MCF 10A (cell line): ENCODE measurements at regions of chr2 and their contacts with region 1.

Region 1: GRCh38 chr2:152025678-152026287 is 73.1 kb downstream of the CACNB4 start:
- DNase-seq: peak; percentile 79
- H3K4me3 Mint-ChIP-seq: peak overlapping the region; percentile 60
- H3K27ac Mint-ChIP-seq: no peak overlapping the region
- H3K4me1 Mint-ChIP-seq: peaks cover 24% of the 10 kb centered on the region
- H3K27me3 Mint-ChIP-seq: peaks cover under 1% of the 10 kb centered on the region
- CTCF ChIP-seq: peak; percentile 93

Region 2: GRCh38 chr2:151459358-151459757 is 566.4 kb before region 1 on chr2:
- CTCF ChIA-PET with region 1: interaction called, 9 read pairs
- POLR2A ChIA-PET with region 1: no interaction called
- intact Hi-C with region 1: loop called (anchors 10 kb)
- DNase-seq: no peak
- H3K4me3 Mint-ChIP-seq: no peak overlapping the region
- H3K27ac Mint-ChIP-seq: no peak overlapping the region
- H3K4me1 Mint-ChIP-seq: no peaks in the 10 kb centered on the region
- H3K27me3 Mint-ChIP-seq: no peaks in the 10 kb centered on the region
- CTCF ChIP-seq: no peak

Region 3: GRCh38 chr2:151614606-151615306 is 411.0 kb before region 1 on chr2:
- CTCF ChIA-PET with region 1: interaction called, 14 read pairs
- POLR2A ChIA-PET with region 1: no interaction called
- intact Hi-C with region 1: no loop called
- DNase-seq: no peak
- H3K4me3 Mint-ChIP-seq: no peak overlapping the region
- H3K27ac Mint-ChIP-seq: no peak overlapping the region
- H3K4me1 Mint-ChIP-seq: no peaks in the 10 kb centered on the region
- H3K27me3 Mint-ChIP-seq: no peaks in the 10 kb centered on the region
- CTCF ChIP-seq: no peak

Region 4: DNA sequence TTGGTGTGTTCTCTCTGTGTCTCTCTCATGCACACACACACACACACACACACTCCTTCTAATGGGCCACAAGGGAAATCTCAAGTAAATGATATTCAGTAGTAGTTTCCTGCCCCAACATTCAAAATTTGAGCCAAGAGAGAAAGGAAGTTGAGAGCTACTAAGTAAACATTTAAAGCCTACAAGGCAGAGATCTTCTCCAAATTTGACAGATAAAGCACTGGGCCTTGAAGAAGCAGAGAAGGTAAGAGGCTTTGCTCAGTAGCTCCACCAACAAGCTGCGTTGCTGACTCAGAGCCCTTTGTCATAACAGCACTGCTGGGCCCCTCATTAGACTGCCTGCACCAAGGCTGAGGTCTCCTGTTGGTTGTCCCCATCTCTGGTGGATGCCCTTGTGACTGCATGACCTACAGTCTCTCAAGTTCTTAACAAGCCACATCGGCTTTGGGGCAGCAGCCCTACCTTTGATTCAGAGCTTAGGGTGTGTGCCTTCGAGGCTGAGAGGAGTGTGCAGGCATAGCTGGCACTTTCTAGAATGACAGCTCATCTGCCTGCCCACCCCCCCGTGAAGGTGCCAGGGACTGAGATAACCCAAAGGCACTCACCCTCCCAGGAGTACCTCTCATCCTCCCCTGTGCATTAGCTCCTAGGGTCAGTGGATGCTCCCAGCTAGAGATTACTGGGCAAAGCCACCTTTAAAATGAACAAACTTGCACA is 259.2 kb before region 1 on chr2:
- CTCF ChIA-PET with region 1: interaction called, 12 read pairs
- POLR2A ChIA-PET with region 1: interaction called, 3 read pairs
- intact Hi-C with region 1: no loop called
- DNase-seq: no peak
- H3K4me3 Mint-ChIP-seq: no peak overlapping the region
- H3K27ac Mint-ChIP-seq: peak overlapping the region; percentile 25
- H3K4me1 Mint-ChIP-seq: no peaks in the 10 kb centered on the region
- H3K27me3 Mint-ChIP-seq: no peaks in the 10 kb centered on the region
- CTCF ChIP-seq: no peak

Region 5: GRCh38 chr2:151828143-151828889 is 197.5 kb before region 1 on chr2 and contains the start of gene ARL5A:
- CTCF ChIA-PET with region 1: interaction called, 9 read pairs
- POLR2A ChIA-PET with region 1: interaction called, 4 read pairs
- intact Hi-C with region 1: loop called (anchors 10 kb)
- DNase-seq: peak; percentile 95
- H3K4me3 Mint-ChIP-seq: peak within 1 kb of the TSS; percentile 93
- H3K27ac Mint-ChIP-seq: peak within 1 kb of the TSS; percentile 88
- H3K4me1 Mint-ChIP-seq: peaks cover 9% of the 10 kb centered on the region
- H3K27me3 Mint-ChIP-seq: no peaks in the 10 kb centered on the region
- CTCF ChIP-seq: no peak
- total RNA-seq, gene ARL5A: 34.8 and 40.9 TPM in 2 replicates

Region 6: GRCh38 chr2:152012697-152013096 is 13.1 kb before region 1 on chr2:
- CTCF ChIA-PET with region 1: interaction called, 70 read pairs
- POLR2A ChIA-PET with region 1: interaction called, 3 read pairs
- intact Hi-C with region 1: no loop called
- DNase-seq: no peak
- H3K4me3 Mint-ChIP-seq: no peak overlapping the region
- H3K27ac Mint-ChIP-seq: no peak overlapping the region
- H3K4me1 Mint-ChIP-seq: no peaks in the 10 kb centered on the region
- H3K27me3 Mint-ChIP-seq: no peaks in the 10 kb centered on the region
- CTCF ChIP-seq: no peak